GM12878 (cell line): ENCODE measurements at regions of chr19 and their contacts with region 1.

Region 1: DNA sequence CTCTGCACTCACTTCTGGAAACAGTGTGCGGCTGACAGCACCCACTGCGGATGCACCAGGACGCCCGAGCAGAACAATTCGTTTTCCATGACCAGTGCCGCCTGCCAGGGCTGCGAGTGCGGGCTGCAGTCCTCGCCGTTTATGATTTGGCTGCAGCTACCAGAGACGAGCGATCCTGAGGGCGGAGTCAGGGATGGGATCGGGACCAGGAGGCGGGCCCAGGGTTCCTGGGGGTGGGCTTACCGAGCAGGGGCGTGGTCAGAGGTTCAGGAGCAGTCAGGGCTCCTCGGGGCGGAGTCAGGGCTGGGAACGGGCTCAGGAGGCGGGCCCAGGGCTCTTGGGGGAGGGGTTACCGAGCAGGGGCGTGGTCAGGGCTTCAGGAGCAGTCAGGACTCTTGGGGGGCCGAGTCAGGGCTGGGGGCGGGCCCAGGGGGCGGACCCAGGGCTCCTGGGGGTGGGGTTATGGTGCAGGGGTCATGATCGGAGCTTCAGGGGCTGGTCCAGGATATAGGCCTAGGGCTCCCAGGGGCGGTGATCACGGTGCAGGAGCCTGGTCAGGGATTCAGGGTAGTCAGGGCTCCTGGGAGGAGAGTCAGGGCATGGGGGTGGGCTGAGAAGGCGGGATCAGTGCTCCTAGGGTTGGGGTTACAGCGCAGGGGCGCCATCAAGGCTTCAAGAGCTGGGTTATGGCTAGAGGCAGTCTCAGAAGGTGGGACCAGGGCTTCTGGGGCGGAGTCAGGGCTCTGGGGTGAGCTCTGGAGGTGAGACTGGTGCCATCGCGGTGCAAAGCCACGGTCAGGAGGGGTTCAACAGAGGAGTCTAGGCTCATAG is 1.7 kb downstream of the KLK4 start:
- DNase-seq: no peak
- ATAC-seq: peak; percentile 69
- H3K4me3 ChIP-seq: peak overlapping the region; percentile 47; the same call in 1 of the 2 replicates
- H3K27ac ChIP-seq: no peak overlapping the region
- H3K4me1 ChIP-seq: no peaks in the 10 kb centered on the region
- H3K27me3 ChIP-seq: peaks cover 4 to 9% of the 10 kb centered on the region in 2 experiments; a peak in 3 of 4 replicates
- CTCF ChIP-seq: no peak
- EP300 ChIP-seq: no peak
- POLR2A ChIP-seq: no peak
- RAD21 ChIP-seq: no peak

Region 2: DNA sequence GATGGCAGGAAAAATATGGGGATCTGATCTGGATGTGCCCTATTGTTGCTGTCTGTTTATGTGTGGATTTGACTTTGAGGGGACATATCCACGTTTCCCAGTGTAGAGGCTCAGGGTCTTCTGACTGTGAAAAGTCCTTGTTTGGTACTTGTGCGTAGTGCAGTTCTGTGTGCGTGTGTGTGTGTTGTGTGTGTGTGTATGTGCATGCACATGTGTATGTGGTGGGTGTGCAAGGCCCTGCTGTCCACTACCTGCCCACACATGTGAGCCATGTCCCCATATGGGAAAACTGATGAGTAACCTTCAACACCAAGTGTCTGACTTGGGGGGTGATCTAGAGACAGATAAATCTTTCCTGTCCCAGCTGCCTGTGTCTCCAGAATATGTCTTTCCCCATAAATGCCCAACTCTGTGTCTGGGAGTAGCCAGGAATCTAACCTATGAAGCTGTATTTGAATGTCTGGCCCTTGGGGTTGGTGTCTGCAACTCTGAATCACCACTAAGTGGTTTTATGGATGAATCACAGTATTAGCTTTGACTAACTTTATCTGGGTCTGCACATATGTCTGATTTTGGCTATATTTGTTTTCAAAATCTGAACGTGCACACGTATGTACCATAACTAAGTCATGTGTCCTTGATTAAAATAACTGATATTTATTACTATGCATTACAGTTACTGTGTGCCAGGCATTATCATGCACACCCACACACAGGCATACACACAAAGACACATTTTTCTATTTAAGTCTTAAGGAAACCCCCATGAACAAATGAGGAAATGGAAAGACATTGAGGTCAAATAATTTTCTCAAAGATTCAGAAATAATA is 18.8 kb before region 1 on chr19:
- CTCF ChIA-PET with region 1: interaction called, 18 read pairs
- POLR2A ChIA-PET with region 1: no interaction called
- RAD21 ChIA-PET with region 1: no interaction called
- SMC1A ChIA-PET with region 1: interaction called, 3 read pairs
- in situ Hi-C with region 1: no loop called
- intact Hi-C with region 1: no loop called
- DNase-seq: peak; percentile 46
- ATAC-seq: peak; percentile 72
- H3K4me3 ChIP-seq: no peak overlapping the region
- H3K27ac ChIP-seq: peak overlapping the region; percentile 47
- H3K4me1 ChIP-seq: peaks cover 16% of the 10 kb centered on the region
- H3K27me3 ChIP-seq: no peaks in the 10 kb centered on the region
- CTCF ChIP-seq: no peak
- EP300 ChIP-seq: peak; percentile 79 to 82
- POLR2A ChIP-seq: no peak
- RAD21 ChIP-seq: no peak